Naive thymus-derived CD4-positive, alpha-beta T cell (primary cell): ENCODE measurements at regions of chr2 and their contacts with region 1.

Region 1: DNA sequence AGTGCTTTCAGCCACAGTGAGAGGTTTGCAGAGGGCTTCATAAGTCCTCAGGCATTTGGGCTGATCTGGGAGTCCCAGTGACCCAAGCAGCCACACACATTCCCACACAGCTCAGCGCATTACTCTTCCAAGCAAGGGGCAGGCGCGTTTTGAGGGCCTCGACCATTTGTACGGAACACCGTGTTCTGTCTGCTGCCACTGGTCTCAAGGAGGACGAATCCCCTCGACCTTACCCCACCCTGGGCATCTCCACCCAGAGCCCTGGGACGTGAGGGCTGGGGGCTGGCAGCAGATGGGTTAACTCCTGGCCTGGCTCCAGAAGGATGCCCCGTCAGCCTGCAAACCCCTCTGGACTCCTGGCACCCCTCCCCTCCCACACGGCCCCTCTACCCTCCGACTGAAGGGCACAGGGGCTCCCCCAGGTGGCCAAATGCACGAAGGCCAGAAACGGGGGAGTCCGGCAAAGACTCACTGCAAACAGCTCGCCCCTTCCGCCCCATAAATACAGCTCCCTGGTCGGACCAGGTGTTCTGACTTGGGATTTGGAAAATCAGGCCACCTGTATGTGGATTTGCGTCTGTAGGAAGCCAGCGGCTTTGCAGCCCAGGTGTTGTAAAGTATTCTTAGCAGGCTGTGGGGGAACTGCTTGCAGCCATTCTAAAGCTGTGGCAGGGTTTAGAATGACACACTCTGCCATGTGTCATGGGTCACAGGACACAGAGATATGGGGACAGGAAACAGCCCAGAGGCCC is 33.6 kb upstream of the PTMA start:
- DNase-seq: peak in 7 of 9 donors; percentile 30 to 70 (median 46)
- ATAC-seq: peak; percentile 74
- H3K4me3 ChIP-seq: no peak overlapping the region
- H3K4me3 Mint-ChIP-seq: no peak overlapping the region
- H3K27ac ChIP-seq: no peak overlapping the region
- H3K27ac Mint-ChIP-seq: peak overlapping the region in 1 of 9 donors; percentile 60
- H3K4me1 ChIP-seq: peaks cover 0 to 3% of the 10 kb centered on the region in 2 donors
- H3K4me1 Mint-ChIP-seq: peaks cover 5 to 43% (median 8%) of the 10 kb centered on the region in 7 donors
- H3K27me3 ChIP-seq: no peaks in the 10 kb centered on the region
- H3K27me3 Mint-ChIP-seq: peaks cover 0 to 4% (median 0%) of the 10 kb centered on the region in 5 donors

Region 2: GRCh38 chr2:231648587-231649174 is 26.1 kb before region 1 on chr2:
- CTCF ChIA-PET with region 1: interaction called, 14 read pairs
- POLR2A ChIA-PET with region 1: interaction called, 3 read pairs
- intact Hi-C with region 1: loop called (anchors 1 kb)
- DNase-seq: peak in 6 of 9 donors; percentile 21 to 73 (median 29)
- ATAC-seq: peak; percentile 87
- H3K4me3 ChIP-seq: no peak overlapping the region
- H3K4me3 Mint-ChIP-seq: no peak overlapping the region
- H3K27ac ChIP-seq: no peak overlapping the region
- H3K27ac Mint-ChIP-seq: peak overlapping the region in 1 of 9 donors; percentile 11
- H3K4me1 ChIP-seq: no peaks in the 10 kb centered on the region
- H3K4me1 Mint-ChIP-seq: peaks cover 0 to 20% (median 0%) of the 10 kb centered on the region in 7 donors
- H3K27me3 ChIP-seq: no peaks in the 10 kb centered on the region
- H3K27me3 Mint-ChIP-seq: no peaks in the 10 kb centered on the region

Region 3: DNA sequence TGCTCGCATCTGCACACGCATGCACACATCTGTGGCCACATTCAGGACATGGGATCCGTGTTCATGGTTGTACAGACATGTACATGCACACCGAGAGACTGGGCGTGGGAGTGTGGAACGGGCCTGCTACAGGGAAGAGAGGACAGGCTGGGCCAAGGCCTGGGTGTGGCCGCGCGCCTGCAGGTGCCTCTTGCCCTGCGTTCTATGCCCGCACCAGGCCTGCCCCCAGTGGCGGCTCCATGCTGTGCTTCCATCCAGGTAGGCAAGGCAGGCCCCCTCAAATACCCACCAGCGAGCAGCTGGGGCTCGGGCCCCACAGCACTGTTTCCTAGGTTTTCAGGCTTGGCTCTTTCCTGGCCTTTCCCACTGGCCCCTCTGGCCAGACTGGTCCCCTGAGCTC is 18.1 kb after region 1 on chr2:
- CTCF ChIA-PET with region 1: interaction called, 45 read pairs
- POLR2A ChIA-PET with region 1: no interaction called
- intact Hi-C with region 1: no loop called
- DNase-seq: no peak
- ATAC-seq: peak; percentile 16
- H3K4me3 ChIP-seq: no peak overlapping the region
- H3K4me3 Mint-ChIP-seq: no peak overlapping the region
- H3K27ac ChIP-seq: no peak overlapping the region
- H3K27ac Mint-ChIP-seq: no peak overlapping the region
- H3K4me1 ChIP-seq: no peaks in the 10 kb centered on the region
- H3K4me1 Mint-ChIP-seq: no peaks in the 10 kb centered on the region
- H3K27me3 ChIP-seq: no peaks in the 10 kb centered on the region
- H3K27me3 Mint-ChIP-seq: no peaks in the 10 kb centered on the region

Region 4: GRCh38 chr2:231726228-231726627 is 51.5 kb after region 1 on chr2:
- CTCF ChIA-PET with region 1: interaction called, 475 read pairs
- POLR2A ChIA-PET with region 1: no interaction called
- intact Hi-C with region 1: no loop called
- DNase-seq: no peak
- ATAC-seq: no peak
- H3K4me3 ChIP-seq: no peak overlapping the region
- H3K4me3 Mint-ChIP-seq: no peak overlapping the region
- H3K27ac ChIP-seq: no peak overlapping the region
- H3K27ac Mint-ChIP-seq: no peak overlapping the region
- H3K4me1 ChIP-seq: no peaks in the 10 kb centered on the region
- H3K4me1 Mint-ChIP-seq: no peaks in the 10 kb centered on the region
- H3K27me3 ChIP-seq: no peaks in the 10 kb centered on the region
- H3K27me3 Mint-ChIP-seq: no peaks in the 10 kb centered on the region